ENCODE measurements at regions of chr17 and their contacts with region 1.

Region 1: DNA sequence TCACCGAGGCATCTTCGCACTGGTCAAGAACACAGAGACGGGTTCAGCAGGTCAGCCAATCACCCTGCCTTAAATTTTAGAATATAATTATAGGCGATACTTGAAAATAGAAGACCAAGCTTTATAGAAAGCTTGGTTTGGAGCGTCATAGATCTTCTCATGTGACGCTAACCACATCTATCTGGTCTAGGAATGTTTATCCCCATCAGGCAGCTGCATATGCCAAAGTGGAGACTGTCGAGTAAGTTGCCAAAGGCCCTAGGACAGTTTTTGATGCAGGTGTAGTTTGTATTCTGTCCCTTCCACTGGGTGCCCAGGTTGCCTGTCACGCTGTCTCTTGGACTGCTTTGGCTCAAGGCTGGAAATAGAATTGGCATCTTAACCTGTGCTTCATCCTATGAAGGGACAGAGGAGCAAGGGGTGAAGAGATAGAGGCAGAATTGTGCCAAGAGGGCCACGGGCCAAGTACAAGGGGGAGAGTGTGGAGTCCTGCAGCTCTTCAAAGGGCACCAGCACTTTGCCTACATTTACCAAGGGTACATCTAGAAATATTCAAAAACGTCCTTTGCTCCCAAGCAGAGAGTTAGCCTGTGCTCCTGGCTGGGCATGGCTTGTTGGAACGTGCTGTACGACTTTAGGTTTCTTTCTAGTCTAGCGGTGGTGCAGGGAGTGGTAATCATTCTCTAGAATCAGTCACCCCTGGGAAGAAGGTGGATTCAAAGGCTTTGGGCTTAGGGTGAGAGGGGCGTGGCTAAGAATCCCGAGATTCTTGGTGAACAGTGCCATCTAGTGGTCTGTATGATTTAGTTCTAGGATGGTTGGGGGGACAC is 5.3 kb upstream of the WIPI1 start:
- DNase-seq: no peak
- H3K4me3 ChIP-seq: no peak overlapping the region
- H3K27ac ChIP-seq: no peak overlapping the region
- H3K4me1 ChIP-seq: peaks cover 6 to 13% (median 12%) of the 10 kb centered on the region in 4 donors
- H3K27me3 ChIP-seq: no peaks in the 10 kb centered on the region
- CTCF ChIP-seq: peak; percentile 73 to 82 (median 76)
- EP300 ChIP-seq: no peak
- POLR2A ChIP-seq: no peak

Region 2: GRCh38 chr17:68172461-68172954 is 290.1 kb before region 1 on chr17:
- intact Hi-C with region 1: loop called (anchors 5 kb)
- DNase-seq: no peak
- H3K4me3 ChIP-seq: no peak overlapping the region
- H3K27ac ChIP-seq: no peak overlapping the region
- H3K4me1 ChIP-seq: peaks cover 0 to 5% (median 4%) of the 10 kb centered on the region in 4 donors
- H3K27me3 ChIP-seq: no peaks in the 10 kb centered on the region
- CTCF ChIP-seq: peak in 2 of 3 experiments; percentile 92 to 95
- EP300 ChIP-seq: no peak
- POLR2A ChIP-seq: no peak

Region 3: GRCh38 chr17:68260051-68260762 is 202.4 kb before region 1 on chr17:
- intact Hi-C with region 1: loop called (anchors 2 kb)
- DNase-seq: no peak
- H3K4me3 ChIP-seq: no peak overlapping the region
- H3K27ac ChIP-seq: no peak overlapping the region
- H3K4me1 ChIP-seq: peaks cover 3 to 20% (median 11%) of the 10 kb centered on the region in 4 donors
- H3K27me3 ChIP-seq: no peaks in the 10 kb centered on the region
- CTCF ChIP-seq: no peak
- EP300 ChIP-seq: no peak
- POLR2A ChIP-seq: no peak

Region 4: GRCh38 chr17:68759343-68760132 is 296.9 kb after region 1 on chr17:
- intact Hi-C with region 1: loop called (anchors 10 kb)
- DNase-seq: peak; percentile 96
- H3K4me3 ChIP-seq: peak overlapping the region; percentile 26 to 43 (median 36)
- H3K27ac ChIP-seq: peak overlapping the region; percentile 14 to 67 (median 64)
- H3K4me1 ChIP-seq: peaks cover 6 to 12% (median 7%) of the 10 kb centered on the region in 4 donors
- H3K27me3 ChIP-seq: no peaks in the 10 kb centered on the region
- CTCF ChIP-seq: peak; percentile 79 to 85 (median 84)
- EP300 ChIP-seq: no peak
- POLR2A ChIP-seq: no peak